A673 (cell line): ENCODE measurements at regions of chr19 and their contacts with region 1.

Region 1: GRCh38 chr19:18388100-18388959 is 2.4 kb downstream of the GDF15 start:
- DNase-seq: peak; percentile 84
- H3K4me3 ChIP-seq: peak overlapping the region; percentile 43
- H3K27ac ChIP-seq: no peak overlapping the region
- H3K4me1 ChIP-seq: peaks cover 26% of the 10 kb centered on the region
- H3K27me3 ChIP-seq: no peaks in the 10 kb centered on the region
- CTCF ChIP-seq: peak; percentile 99

Region 2: GRCh38 chr19:18029617-18030338 is 358.6 kb before region 1 on chr19:
- CTCF ChIA-PET with region 1: no interaction called
- POLR2A ChIA-PET with region 1: no interaction called
- intact Hi-C with region 1: no loop called
- DNase-seq: peak; percentile 62
- H3K4me3 ChIP-seq: no peak overlapping the region
- H3K27ac ChIP-seq: no peak overlapping the region
- H3K4me1 ChIP-seq: peaks cover 3% of the 10 kb centered on the region
- H3K27me3 ChIP-seq: no peaks in the 10 kb centered on the region
- CTCF ChIP-seq: no peak

Region 3: GRCh38 chr19:18349524-18350128 is 38.7 kb before region 1 on chr19:
- CTCF ChIA-PET with region 1: interaction called, 10 read pairs
- POLR2A ChIA-PET with region 1: no interaction called
- intact Hi-C with region 1: no loop called
- DNase-seq: peak; percentile 69
- H3K4me3 ChIP-seq: no peak overlapping the region
- H3K27ac ChIP-seq: no peak overlapping the region
- H3K4me1 ChIP-seq: peaks cover 7% of the 10 kb centered on the region
- H3K27me3 ChIP-seq: no peaks in the 10 kb centered on the region
- CTCF ChIP-seq: peak; percentile 92

Region 4: GRCh38 chr19:18419195-18419698 is 30.9 kb after region 1 on chr19 and contains the start of gene SSBP4:
- CTCF ChIA-PET with region 1: interaction called, 12 read pairs
- POLR2A ChIA-PET with region 1: interaction called, 7 read pairs
- intact Hi-C with region 1: no loop called
- DNase-seq: peak; percentile 93
- H3K4me3 ChIP-seq: peak within 1 kb of the TSS; percentile 88
- H3K27ac ChIP-seq: peak within 1 kb of the TSS; percentile 99
- H3K4me1 ChIP-seq: peaks cover 84% of the 10 kb centered on the region
- H3K27me3 ChIP-seq: no peaks in the 10 kb centered on the region
- CTCF ChIP-seq: no peak; the same call in 1 of the 2 replicates
- total RNA-seq, gene SSBP4: 242 and 248 TPM in 2 replicates

Region 5: DNA sequence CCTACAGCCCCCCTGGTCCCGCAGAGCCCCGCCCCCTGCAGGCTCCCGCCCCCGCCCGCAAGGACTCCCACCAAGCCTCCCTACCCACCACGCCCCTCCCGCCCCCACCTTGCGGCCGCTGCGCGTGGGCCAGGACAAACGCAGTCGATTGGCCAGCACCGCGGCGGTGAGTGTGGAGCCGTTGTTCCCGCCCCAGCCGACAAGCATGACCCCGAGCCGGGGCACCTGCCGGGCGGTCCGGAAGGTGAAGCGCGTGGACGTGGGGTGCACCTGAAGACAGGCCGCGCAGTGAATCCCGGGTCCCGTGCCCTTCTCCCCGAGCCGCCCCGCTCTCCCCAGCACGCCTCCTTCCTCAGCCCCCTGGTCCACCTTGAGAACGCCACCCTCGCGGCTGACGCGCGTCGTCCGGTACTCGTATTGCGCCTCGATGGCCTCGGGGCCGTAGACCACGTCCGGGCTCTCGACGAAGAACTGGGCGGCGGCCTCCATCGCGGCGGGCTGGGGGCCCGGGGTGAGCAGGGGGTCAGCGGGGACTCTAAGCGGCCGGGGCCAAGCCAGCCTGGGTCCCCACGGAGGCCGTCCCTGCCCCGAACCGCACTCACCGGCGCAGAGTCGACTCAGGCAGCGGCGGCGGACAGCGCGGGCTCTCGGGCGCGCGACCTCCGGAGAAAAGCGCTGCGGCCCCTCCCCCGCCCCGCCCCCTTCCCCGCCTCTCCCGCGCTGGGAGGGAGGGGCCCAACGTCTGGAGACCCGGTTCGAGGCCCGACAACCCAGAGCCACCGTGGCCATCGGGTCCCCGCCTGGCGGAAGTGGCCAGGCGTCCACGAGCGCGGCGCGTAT is 49.4 kb after region 1 on chr19 and contains the start of gene ISYNA1:
- CTCF ChIA-PET with region 1: no interaction called
- POLR2A ChIA-PET with region 1: interaction called, 13 read pairs
- intact Hi-C with region 1: no loop called
- DNase-seq: peak; percentile 67
- H3K4me3 ChIP-seq: peak within 1 kb of the TSS; percentile 66
- H3K27ac ChIP-seq: peak within 1 kb of the TSS; percentile 84
- H3K4me1 ChIP-seq: peaks cover 47% of the 10 kb centered on the region
- H3K27me3 ChIP-seq: no peaks in the 10 kb centered on the region
- CTCF ChIP-seq: no peak
- total RNA-seq, gene ISYNA1: 153 and 223 TPM in 2 replicates

Region 6: GRCh38 chr19:18456974-18457373 is 68.6 kb after region 1 on chr19:
- CTCF ChIA-PET with region 1: no interaction called
- POLR2A ChIA-PET with region 1: no interaction called
- intact Hi-C with region 1: no loop called
- DNase-seq: no peak
- H3K4me3 ChIP-seq: no peak overlapping the region
- H3K27ac ChIP-seq: no peak overlapping the region
- H3K4me1 ChIP-seq: no peaks in the 10 kb centered on the region
- H3K27me3 ChIP-seq: no peaks in the 10 kb centered on the region
- CTCF ChIP-seq: no peak